Activated CD4-positive, alpha-beta T cell treated with anti-CD3 and anti-CD28 coated beads, Interleukin-2, amount 10 ng/mL, durations not matched to agents 24 days and 14 days (primary cell): ENCODE measurements at regions of chr1 and their contacts with region 1.

Region 1: GRCh38 chr1:225999227-225999911 is at the start of gene SDE2:
- DNase-seq: peak; percentile 100
- H3K4me3 Mint-ChIP-seq: peak within 1 kb of the TSS; percentile 97
- H3K27ac Mint-ChIP-seq: peak within 1 kb of the TSS; percentile 99
- H3K4me1 Mint-ChIP-seq: peaks cover 53% of the 10 kb centered on the region
- H3K27me3 Mint-ChIP-seq: no peaks in the 10 kb centered on the region
- total RNA-seq, gene SDE2: 26.9 and 27.1 TPM in 2 replicates

Region 2: GRCh38 chr1:225428068-225428880 is 571.1 kb before region 1 on chr1:
- intact Hi-C with region 1: loop called (anchors 2 kb)
- DNase-seq: peak; percentile 98
- H3K4me3 Mint-ChIP-seq: peak overlapping the region; percentile 90
- H3K27ac Mint-ChIP-seq: peak overlapping the region; percentile 95
- H3K4me1 Mint-ChIP-seq: peaks cover 50% of the 10 kb centered on the region
- H3K27me3 Mint-ChIP-seq: no peaks in the 10 kb centered on the region

Region 3: GRCh38 chr1:225866061-225866837 is 133.1 kb before region 1 on chr1:
- intact Hi-C with region 1: loop called (anchors 1 kb)
- DNase-seq: peak; percentile 89
- H3K4me3 Mint-ChIP-seq: peak overlapping the region; percentile 66
- H3K27ac Mint-ChIP-seq: peak overlapping the region; percentile 74
- H3K4me1 Mint-ChIP-seq: peaks cover 31% of the 10 kb centered on the region
- H3K27me3 Mint-ChIP-seq: no peaks in the 10 kb centered on the region

Region 4: DNA sequence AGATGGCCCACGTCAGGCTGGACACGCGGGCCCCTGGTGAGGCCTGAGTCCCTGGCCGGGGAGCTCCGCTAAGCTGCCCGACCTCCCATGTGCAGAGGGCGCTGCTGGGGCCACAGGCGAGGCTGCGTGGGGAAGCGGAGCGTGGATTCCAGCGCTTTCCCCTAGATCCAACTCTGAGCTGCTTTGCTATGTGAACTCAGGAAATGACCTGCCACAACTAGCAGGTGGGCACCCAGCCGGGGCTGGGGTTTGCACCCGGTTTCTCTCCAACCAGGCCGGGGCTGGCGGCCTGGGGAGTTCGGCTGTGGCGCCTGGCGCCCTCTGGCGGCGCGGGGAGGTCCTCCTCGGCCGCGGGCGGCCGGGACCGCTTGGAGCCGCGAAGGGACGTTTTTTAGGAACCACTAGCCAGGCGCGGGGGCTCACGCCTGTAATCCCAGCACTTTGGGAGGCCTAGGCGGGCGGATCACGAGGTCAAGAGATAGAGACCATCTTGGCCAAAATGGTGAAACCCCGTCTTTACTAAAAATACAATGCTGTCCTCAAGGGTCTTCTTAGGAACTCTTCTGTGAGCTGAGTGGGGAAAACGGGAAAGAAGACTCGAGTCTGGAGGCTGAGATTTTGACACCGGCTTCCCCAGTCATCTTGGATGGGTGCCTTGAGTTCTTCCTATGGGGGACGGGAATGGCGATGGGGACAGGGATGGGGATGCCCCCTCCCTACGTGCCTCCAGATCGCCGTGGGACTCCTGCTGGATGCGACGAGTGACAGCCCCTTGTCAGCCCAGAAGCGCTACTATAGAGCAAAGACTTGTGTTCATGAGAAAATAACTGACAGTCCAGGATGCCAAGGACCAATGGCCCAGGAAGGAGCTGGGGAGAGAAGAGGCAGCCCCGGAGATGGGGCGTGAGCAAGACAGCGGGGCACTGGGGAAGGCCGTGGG is 87.9 kb before region 1 on chr1:
- intact Hi-C with region 1: no loop called
- DNase-seq: peak; percentile 93
- H3K4me3 Mint-ChIP-seq: no peak overlapping the region
- H3K27ac Mint-ChIP-seq: no peak overlapping the region
- H3K4me1 Mint-ChIP-seq: peaks cover 11% of the 10 kb centered on the region
- H3K27me3 Mint-ChIP-seq: peaks cover 8% of the 10 kb centered on the region

Region 5: GRCh38 chr1:226034482-226034881 is 35.1 kb after region 1 on chr1:
- intact Hi-C with region 1: no loop called
- DNase-seq: no peak
- H3K4me3 Mint-ChIP-seq: no peak overlapping the region
- H3K27ac Mint-ChIP-seq: no peak overlapping the region
- H3K4me1 Mint-ChIP-seq: no peaks in the 10 kb centered on the region
- H3K27me3 Mint-ChIP-seq: no peaks in the 10 kb centered on the region

Region 6: DNA sequence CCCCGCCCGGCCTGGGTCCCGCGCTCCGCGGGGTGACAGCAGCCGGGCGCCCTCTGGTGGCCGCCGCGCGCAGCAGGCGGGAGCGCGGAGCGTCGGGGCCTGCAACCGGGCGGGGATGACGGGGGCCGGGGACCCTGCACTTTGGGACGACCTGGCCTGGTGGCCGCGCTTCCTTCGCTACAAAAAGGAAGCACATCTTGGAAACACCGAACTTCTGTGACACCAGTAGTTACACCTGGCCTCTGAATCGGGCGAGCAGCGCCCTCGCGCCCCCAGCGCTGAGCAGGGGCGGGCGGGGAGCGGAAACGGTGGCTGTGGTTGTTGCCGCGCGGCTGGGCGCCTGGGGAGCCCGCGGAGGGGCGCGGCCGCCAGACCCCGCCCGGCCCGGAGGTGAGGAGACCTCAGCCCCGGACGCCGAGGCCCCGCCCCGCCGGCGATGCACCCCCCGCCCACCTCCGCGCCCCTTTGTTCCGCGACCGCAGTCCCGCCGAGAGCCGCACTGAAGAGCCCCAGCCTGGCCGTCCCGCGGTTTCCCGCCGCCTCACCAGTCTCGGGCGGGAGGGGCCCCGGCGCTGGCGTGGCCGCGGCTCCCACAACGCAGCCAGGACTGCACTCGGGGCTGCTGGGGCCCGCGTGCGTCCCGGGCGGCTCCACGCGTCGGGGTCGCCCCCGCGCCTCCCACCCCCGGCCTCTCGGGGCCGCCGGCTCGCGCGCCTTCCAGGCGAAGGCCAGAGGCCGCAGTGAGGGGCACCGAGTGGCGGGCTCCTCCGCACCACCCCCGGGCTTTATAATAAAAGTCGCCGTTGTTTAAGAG is 122.4 kb after region 1 on chr1:
- intact Hi-C with region 1: loop called (anchors 5 kb)
- DNase-seq: peak; percentile 94
- H3K4me3 Mint-ChIP-seq: peak overlapping the region; percentile 80
- H3K27ac Mint-ChIP-seq: peak overlapping the region; percentile 75
- H3K4me1 Mint-ChIP-seq: peaks cover 22% of the 10 kb centered on the region
- H3K27me3 Mint-ChIP-seq: peaks cover 3% of the 10 kb centered on the region

Region 7: DNA sequence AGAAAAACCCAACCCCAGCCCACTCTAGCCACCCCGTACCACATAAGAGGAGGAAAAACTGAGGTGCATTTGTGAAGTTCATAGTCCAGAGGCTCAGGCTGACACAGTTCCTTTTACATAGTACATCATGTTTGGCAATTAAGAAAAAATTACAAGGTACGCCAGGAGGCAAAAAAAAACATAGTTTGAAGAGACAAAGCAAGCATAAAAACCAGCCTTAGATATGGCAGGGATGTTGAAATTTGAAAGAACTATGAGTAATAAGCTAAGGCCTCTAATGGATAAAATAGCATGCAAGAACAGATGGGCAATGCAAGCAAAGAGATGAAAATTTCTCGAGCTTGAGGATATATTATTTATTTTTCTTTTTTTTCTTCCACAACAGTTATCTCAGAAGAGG is 256.0 kb after region 1 on chr1:
- intact Hi-C with region 1: no loop called
- DNase-seq: no peak
- H3K4me3 Mint-ChIP-seq: no peak overlapping the region
- H3K27ac Mint-ChIP-seq: no peak overlapping the region
- H3K4me1 Mint-ChIP-seq: no peaks in the 10 kb centered on the region
- H3K27me3 Mint-ChIP-seq: no peaks in the 10 kb centered on the region

Region 8: DNA sequence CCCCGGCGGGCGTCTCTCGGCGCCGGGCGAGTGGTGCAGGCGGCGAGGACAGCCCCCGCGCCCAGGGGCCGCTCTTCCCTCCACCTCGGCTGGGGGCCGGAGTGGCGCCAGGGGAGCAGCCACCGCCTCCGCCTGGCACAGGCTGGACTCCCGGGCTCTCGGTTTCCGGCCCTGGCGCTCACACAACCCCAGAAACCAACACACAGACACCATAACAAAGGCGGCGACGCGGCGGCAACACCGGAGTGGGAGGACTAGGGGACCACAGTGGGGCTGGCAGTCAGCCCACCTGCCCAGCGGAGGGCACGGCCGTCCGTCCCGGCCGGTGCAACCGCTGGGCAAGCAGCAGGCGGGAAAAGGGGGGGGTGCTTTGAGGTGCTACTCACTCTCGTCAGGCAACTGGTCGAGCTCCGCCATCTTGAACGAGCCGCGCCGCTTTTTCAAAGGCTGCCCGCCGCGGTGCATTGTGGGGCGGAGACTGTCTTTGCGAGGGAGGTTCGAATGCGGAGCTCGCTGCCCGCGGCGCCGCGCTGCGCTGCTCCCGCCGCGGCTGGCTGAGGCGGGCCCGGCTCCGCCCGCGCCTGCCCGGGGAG is 309.4 kb after region 1 on chr1 and contains the start of gene LIN9:
- intact Hi-C with region 1: loop called (anchors 5 kb)
- DNase-seq: peak; percentile 98
- H3K4me3 Mint-ChIP-seq: peak within 1 kb of the TSS; percentile 91
- H3K27ac Mint-ChIP-seq: peak within 1 kb of the TSS; percentile 89
- H3K4me1 Mint-ChIP-seq: peaks cover 31% of the 10 kb centered on the region
- H3K27me3 Mint-ChIP-seq: peaks cover 20% of the 10 kb centered on the region
- total RNA-seq, gene LIN9: 10.5 and 13.8 TPM in 2 replicates